ENCODE measurements at regions of chr15 and their contacts with region 1.

Region 1: DNA sequence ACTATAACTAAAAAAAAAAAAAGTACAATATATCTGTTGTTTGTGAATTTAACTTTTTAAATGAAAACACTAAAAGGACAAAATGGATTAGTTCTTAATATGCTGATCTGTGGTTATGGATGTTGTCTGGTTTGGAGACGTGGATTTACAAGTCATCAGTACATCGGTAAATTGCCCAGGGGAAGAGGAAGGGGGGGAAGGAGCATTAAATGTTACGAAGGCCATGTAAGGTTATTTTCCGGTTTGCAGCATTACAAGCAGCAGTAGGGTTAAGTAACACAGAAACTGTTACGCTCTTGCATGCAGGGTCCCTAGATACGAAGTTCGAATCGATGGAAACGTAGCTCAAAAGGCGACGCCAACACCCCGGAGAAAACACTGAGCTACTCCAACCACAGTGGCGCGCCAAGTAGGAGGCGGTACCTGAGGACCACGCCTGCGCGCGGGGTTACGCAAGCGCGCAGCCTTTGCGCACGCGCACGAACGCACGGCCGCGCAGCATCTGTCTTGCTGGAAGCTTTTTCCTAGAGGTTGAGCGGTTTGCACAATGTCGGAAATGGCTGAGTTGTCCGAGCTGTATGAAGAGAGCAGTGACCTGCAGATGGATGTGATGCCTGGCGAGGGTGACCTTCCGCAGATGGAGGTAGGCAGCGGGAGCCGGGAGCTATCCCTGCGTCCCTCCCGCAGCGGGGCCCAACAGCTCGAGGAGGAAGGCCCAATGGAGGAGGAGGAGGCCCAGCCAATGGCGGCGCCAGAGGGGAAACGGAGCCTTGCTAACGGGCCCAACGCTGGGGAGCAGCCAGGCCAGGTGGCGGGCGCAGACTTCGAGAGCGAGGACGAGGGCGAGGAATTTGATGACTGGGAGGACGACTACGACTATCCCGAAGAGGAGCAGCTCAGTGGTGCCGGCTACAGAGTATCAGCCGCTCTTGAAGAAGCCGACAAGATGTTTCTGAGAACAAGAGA is at the start of gene EID1:
- DNase-seq: peak; percentile 86 to 97 (median 92)
- ATAC-seq: peak; percentile 94
- H3K4me3 ChIP-seq: peak within 1 kb of the TSS; percentile 76 to 91
- H3K4me3 Mint-ChIP-seq: peak within 1 kb of the TSS; percentile 94
- H3K27ac ChIP-seq: peak within 1 kb of the TSS; percentile 74 to 84
- H3K27ac Mint-ChIP-seq: peak within 1 kb of the TSS; percentile 98
- H3K4me1 ChIP-seq: peaks cover 11% of the 10 kb centered on the region
- H3K4me1 Mint-ChIP-seq: peaks cover 23% of the 10 kb centered on the region
- H3K27me3 ChIP-seq: peaks cover 0 to 2% of the 10 kb centered on the region in 2 experiments
- H3K27me3 Mint-ChIP-seq: peaks cover 6% of the 10 kb centered on the region
- CTCF ChIP-seq: no peak
- total RNA-seq, gene EID1: 34.5 to 34.7 TPM

Region 2: GRCh38 chr15:48330855-48331795 is 546.8 kb before region 1 on chr15 and contains the start of gene DUT:
- CTCF ChIA-PET with region 1: no interaction called
- POLR2A ChIA-PET with region 1: no interaction called
- intact Hi-C with region 1: loop called (anchors 2 to 5 kb)
- DNase-seq: peak; percentile 64 to 89 (median 79)
- ATAC-seq: peak; percentile 83
- H3K4me3 ChIP-seq: peak within 1 kb of the TSS; percentile 65 to 74
- H3K4me3 Mint-ChIP-seq: peak within 1 kb of the TSS; percentile 99
- H3K27ac ChIP-seq: peak within 1 kb of the TSS; percentile 84 to 90
- H3K27ac Mint-ChIP-seq: peak within 1 kb of the TSS; percentile 99
- H3K4me1 ChIP-seq: peaks cover 11% of the 10 kb centered on the region
- H3K4me1 Mint-ChIP-seq: peaks cover 22% of the 10 kb centered on the region
- H3K27me3 ChIP-seq: no peaks in the 10 kb centered on the region
- H3K27me3 Mint-ChIP-seq: no peaks in the 10 kb centered on the region
- CTCF ChIP-seq: no peak
- total RNA-seq, gene DUT: 40.6 to 47.3 TPM

Region 3: GRCh38 chr15:48861813-48862431 is 16.0 kb before region 1 on chr15:
- CTCF ChIA-PET with region 1: interaction called, 16 read pairs
- POLR2A ChIA-PET with region 1: interaction called, 5 read pairs
- intact Hi-C with region 1: no loop called
- DNase-seq: peak in 7 of 9 experiments; percentile 9 to 80 (median 41)
- ATAC-seq: peak; percentile 63
- H3K4me3 ChIP-seq: no peak overlapping the region
- H3K4me3 Mint-ChIP-seq: no peak overlapping the region
- H3K27ac ChIP-seq: no peak overlapping the region
- H3K27ac Mint-ChIP-seq: no peak overlapping the region
- H3K4me1 ChIP-seq: no peaks in the 10 kb centered on the region
- H3K4me1 Mint-ChIP-seq: no peaks in the 10 kb centered on the region
- H3K27me3 ChIP-seq: no peaks in the 10 kb centered on the region
- H3K27me3 Mint-ChIP-seq: peaks cover 2% of the 10 kb centered on the region
- CTCF ChIP-seq: peak; percentile 94

Region 4: DNA sequence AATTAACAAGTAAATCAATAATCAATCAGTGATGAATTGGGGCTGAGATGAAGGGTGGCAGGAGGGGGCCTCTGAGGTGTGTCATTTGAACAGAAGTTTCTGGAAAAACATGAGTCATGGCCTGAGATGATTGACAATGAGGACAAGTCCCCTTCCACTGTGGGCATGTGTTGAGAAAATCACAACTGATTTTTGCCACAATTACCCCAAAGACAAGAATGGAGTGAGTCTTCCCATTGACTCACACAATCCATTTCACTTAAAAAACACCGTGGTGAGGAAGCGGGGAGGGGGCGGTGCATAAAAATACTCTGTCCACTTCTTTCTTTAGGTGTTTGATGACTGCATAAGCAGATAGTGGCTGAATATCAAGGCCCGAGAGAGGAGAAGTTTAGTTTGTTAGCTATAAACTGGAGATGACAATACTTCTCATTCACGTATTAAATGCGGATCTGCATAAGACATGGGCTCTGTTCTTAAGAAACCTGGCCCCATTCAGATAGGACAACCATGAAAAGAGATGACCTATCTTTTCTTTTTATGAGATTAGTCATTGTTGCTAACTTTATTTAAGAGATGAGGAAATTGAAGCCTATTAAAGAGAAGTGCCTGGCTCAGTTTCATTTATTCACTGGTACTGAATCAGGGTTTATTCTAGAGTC is 51.1 kb after region 1 on chr15:
- CTCF ChIA-PET with region 1: no interaction called
- POLR2A ChIA-PET with region 1: no interaction called
- intact Hi-C with region 1: no loop called
- DNase-seq: no peak
- ATAC-seq: no peak
- H3K4me3 ChIP-seq: no peak overlapping the region
- H3K4me3 Mint-ChIP-seq: no peak overlapping the region
- H3K27ac ChIP-seq: no peak overlapping the region
- H3K27ac Mint-ChIP-seq: no peak overlapping the region
- H3K4me1 ChIP-seq: no peaks in the 10 kb centered on the region
- H3K4me1 Mint-ChIP-seq: no peaks in the 10 kb centered on the region
- H3K27me3 ChIP-seq: no peaks in the 10 kb centered on the region
- H3K27me3 Mint-ChIP-seq: peaks cover 11% of the 10 kb centered on the region
- CTCF ChIP-seq: no peak

Region 5: GRCh38 chr15:49169880-49170597 is 292.1 kb after region 1 on chr15 and contains the start of gene GALK2:
- CTCF ChIA-PET with region 1: no interaction called
- POLR2A ChIA-PET with region 1: no interaction called
- intact Hi-C with region 1: loop called in 1 of 2 experiments (anchors 5 kb)
- DNase-seq: peak; percentile 58 to 91 (median 81)
- ATAC-seq: peak; percentile 99
- H3K4me3 ChIP-seq: peak within 1 kb of the TSS; percentile 67 to 75
- H3K4me3 Mint-ChIP-seq: peak within 1 kb of the TSS; percentile 96
- H3K27ac ChIP-seq: peak within 1 kb of the TSS; percentile 74 to 88
- H3K27ac Mint-ChIP-seq: peak within 1 kb of the TSS; percentile 98
- H3K4me1 ChIP-seq: peaks cover 11% of the 10 kb centered on the region
- H3K4me1 Mint-ChIP-seq: peaks cover 43% of the 10 kb centered on the region
- H3K27me3 ChIP-seq: no peaks in the 10 kb centered on the region
- H3K27me3 Mint-ChIP-seq: no peaks in the 10 kb centered on the region
- CTCF ChIP-seq: no peak
- total RNA-seq, gene GALK2: 7.7 to 10.7 TPM

Region 6: GRCh38 chr15:50315814-50316630 is 1438.1 kb after region 1 on chr15:
- CTCF ChIA-PET with region 1: no interaction called
- POLR2A ChIA-PET with region 1: no interaction called
- intact Hi-C with region 1: loop called in 1 of 2 experiments (anchors 5 kb)
- DNase-seq: peak in 2 of 9 experiments; percentile 58 to 71
- ATAC-seq: peak; percentile 29
- H3K4me3 ChIP-seq: no peak overlapping the region
- H3K4me3 Mint-ChIP-seq: no peak overlapping the region
- H3K27ac ChIP-seq: no peak overlapping the region
- H3K27ac Mint-ChIP-seq: no peak overlapping the region
- H3K4me1 ChIP-seq: no peaks in the 10 kb centered on the region
- H3K4me1 Mint-ChIP-seq: peaks cover 19% of the 10 kb centered on the region
- H3K27me3 ChIP-seq: no peaks in the 10 kb centered on the region
- H3K27me3 Mint-ChIP-seq: no peaks in the 10 kb centered on the region
- CTCF ChIP-seq: peak; percentile 97

Region 7: DNA sequence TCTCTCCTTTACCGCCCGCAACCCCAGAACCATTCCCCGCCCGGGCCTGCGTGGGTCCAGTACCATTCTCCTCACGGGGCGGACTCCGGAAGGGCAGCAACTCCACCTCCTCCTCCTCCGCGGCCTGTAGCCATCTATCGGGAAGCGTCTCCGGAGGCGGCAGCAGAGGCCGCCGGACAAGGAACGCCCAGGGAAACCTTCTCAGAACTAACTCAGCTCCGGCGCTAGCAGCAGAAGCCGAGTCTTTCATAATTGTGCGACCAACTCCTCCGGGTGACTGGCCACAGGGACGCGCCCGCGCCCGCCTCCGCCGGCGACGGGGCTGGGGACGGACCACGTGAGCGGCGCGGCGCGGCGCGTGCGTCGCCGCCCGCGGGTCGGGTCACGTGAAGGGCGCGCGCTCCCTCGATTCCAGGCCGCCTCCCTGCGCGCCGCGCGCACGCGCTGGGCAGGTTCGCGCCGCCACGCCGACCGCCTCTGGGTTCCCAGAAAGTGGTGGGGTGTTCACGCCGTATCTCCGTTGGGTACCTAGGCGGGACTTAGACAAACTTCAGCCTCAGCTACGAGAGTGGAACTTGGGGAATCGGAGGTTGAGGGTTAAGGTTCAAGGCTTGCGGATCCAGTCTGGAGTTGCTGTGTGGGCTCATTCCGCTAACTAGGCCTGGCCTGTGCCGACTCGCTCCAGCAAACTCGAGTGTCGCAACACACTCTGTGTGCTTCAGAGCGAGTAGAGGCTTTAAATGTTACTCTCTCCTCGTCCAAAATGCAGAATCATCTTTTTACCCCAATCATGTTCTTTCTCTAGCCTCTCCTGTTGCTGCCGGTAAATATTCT is 1808.8 kb after region 1 on chr15 and contains the start of gene TRPM7:
- CTCF ChIA-PET with region 1: no interaction called
- POLR2A ChIA-PET with region 1: no interaction called
- intact Hi-C with region 1: loop called in 1 of 2 experiments (anchors 5 kb)
- DNase-seq: peak; percentile 74 to 96 (median 87)
- ATAC-seq: peak; percentile 74
- H3K4me3 ChIP-seq: peak within 1 kb of the TSS; percentile 78 to 88
- H3K4me3 Mint-ChIP-seq: peak within 1 kb of the TSS; percentile 99
- H3K27ac ChIP-seq: peak within 1 kb of the TSS; percentile 90 to 93
- H3K27ac Mint-ChIP-seq: peak within 1 kb of the TSS; percentile 99
- H3K4me1 ChIP-seq: peaks cover 21% of the 10 kb centered on the region
- H3K4me1 Mint-ChIP-seq: peaks cover 50% of the 10 kb centered on the region
- H3K27me3 ChIP-seq: no peaks in the 10 kb centered on the region
- H3K27me3 Mint-ChIP-seq: no peaks in the 10 kb centered on the region
- CTCF ChIP-seq: no peak
- total RNA-seq, gene TRPM7: 29.5 to 30.3 TPM